ENCODE measurements at regions of chr3 and their contacts with region 1.

Region 1: DNA sequence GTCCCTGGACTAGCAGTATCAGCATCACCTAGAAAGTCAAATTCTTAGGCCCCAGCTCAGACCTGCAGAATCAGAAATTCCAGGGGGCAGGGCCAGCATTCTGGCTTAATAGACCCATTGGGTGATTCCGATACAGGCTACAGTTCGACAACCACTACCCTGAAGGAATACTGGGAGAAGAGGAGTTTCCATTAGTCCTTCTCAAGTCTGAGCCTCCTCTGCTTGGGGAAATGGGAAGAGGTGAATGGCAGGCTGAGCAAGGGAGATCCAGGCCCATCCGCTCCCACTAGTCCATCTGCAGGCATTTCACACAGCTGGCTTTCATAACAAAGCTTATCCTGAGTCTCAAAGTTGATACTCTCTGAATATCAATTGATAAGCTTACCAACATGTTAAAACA is 69.1 kb downstream of the MECOM start:
- DNase-seq: no peak
- H3K4me3 ChIP-seq: no peak overlapping the region
- H3K27ac ChIP-seq: no peak overlapping the region
- H3K27me3 ChIP-seq: no peaks in the 10 kb centered on the region
- CTCF ChIP-seq: no peak

Region 2: GRCh38 chr3:169430707-169431404 is 163.5 kb before region 1 on chr3:
- CTCF ChIA-PET with region 1: no interaction called
- POLR2A ChIA-PET with region 1: no interaction called
- DNase-seq: no peak
- H3K4me3 ChIP-seq: no peak overlapping the region
- H3K27ac ChIP-seq: no peak overlapping the region
- H3K27me3 ChIP-seq: no peaks in the 10 kb centered on the region
- CTCF ChIP-seq: no peak

Region 3: DNA sequence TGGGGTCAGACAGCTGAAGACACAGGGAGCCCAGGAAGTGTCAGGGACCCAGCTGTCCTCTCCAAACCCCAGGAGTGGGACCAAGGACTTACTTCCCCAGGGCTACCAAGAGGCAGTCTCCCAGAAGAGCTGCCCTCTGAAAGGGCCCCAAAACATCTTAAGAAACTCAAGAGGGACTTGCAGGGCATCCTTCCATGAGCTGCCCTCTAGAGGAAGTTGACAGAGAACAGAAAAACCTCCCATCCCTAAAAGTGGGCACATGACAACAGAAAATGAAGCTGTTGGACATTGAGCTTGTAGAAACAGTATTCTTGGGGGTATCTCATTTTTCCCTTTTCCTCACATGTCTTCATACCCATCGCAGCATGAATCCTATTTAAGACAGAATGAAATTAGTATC is 10.2 kb after region 1 on chr3:
- CTCF ChIA-PET with region 1: interaction called, 10 read pairs
- POLR2A ChIA-PET with region 1: no interaction called
- DNase-seq: no peak
- H3K4me3 ChIP-seq: no peak overlapping the region
- H3K27ac ChIP-seq: no peak overlapping the region
- H3K27me3 ChIP-seq: peaks cover 2% of the 10 kb centered on the region
- CTCF ChIP-seq: peak; percentile 20; the same call in 1 of the 2 replicates